Left colon (tissue), 2 donors: ENCODE measurements at regions of chr14 and their contacts with region 1.

Region 1: DNA sequence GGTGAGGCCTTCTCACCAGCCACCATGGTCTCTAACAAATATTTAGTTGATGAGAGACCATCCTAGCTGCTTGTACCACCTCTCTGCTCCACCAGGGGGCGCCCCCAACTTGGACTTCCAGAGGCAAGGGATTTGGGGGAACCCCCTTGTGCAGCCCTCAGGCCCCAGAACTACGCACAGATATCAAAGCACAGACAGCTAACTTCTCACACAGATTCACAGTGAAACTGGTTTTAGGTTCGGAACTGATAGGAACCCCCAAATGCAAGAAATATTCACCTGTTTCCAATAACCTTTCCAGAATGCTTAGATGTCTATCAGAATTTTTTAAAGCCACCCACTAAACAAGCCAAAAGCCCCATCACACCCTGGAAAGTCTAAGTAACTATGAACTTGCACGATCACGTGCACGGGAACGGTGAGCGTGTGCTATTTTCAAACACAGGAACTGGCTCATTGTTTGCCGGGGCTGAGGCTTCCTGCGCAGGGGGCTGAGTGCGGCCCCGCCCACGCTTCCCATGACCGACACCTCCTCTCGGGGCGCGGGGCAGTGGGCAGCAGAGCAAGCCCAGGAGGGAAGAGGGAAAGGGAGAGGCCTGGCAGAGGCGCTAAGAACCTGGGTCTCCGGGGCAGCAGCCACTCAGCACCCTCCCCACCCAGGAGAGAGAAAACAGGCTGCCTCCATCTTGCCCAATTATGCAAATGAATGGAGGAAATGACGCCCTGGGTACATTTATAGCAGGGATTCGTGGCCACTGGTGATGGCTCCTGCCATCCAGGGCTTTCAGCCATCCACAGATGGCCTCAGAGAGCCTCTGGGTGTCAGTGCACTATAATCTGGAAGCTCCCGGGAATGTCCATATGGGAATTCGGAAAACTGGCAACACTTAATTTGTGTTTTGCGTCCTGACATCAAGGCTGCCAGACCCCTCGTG is 79.4 kb upstream of the GPR68 start:
- DNase-seq: peak; percentile 75 to 91
- ATAC-seq: peak; percentile 70

Region 2: DNA sequence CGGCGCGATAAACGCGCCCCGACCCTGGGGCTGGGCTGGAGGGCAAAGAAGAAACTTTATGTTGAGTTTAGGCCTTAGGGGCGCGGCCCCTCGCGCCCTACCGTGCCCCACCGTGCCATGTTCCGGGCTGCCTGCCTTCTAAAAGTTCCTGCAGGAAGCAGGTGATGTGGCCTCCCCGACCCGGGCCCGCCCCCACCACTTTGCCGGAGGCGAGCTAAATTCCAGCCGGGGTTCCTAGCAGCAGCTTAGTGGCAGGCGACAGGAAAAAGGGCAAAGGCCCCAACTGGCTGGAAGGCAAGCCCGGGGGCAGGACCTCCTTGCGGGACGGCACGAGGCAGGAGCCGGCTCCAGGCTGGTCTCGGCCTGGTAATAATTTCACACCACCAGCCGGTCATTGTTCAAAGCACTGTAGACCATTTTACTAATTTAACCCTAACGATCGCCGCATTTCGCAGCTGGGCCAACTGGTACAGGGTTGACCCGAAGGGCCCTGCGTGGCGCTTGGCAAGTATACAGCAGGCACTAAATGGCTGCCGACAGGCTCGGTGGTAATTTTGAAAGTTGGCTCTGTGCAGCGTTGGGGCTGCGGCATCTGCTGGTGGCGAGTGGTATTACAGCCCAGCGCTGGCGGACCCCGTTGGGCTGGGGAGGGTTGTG is 94.6 kb after region 1 on chr14:
- intact Hi-C with region 1: loop called (anchors 1 to 5 kb)
- DNase-seq: peak in 1 of 2 donors; percentile 82
- ATAC-seq: peak; percentile 45